T-cell (primary cell): ENCODE measurements at regions of chr9 and their contacts with region 1.

Region 1: DNA sequence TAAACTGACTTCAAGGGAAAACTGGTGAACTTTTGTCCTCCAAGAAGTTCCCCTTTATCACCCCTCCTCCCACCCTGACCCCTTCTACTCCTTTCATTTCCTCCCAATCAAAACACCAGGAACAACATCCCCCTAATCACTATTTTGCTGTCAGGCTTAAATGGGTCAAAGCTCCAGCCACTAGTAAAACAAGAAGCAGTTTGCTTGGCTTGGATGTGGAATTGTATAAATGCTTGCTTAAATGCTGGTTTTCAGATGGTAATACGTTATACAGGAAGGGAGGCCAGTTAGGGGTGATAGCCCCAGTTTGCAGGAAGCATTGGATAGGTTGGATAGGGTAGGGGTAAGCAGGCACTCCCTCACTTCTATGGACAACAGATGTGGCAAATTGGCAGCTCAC is 473.6 kb downstream of the AGTPBP1 start:
- DNase-seq: no peak
- ATAC-seq: no peak
- H3K4me3 ChIP-seq: no peak overlapping the region
- H3K4me3 Mint-ChIP-seq: no peak overlapping the region
- H3K27ac ChIP-seq: no peak overlapping the region
- H3K27ac Mint-ChIP-seq: no peak overlapping the region
- H3K4me1 ChIP-seq: no peaks in the 10 kb centered on the region
- H3K4me1 Mint-ChIP-seq: no peaks in the 10 kb centered on the region
- H3K27me3 ChIP-seq: peaks cover 0 to 5% of the 10 kb centered on the region in 2 experiments
- H3K27me3 Mint-ChIP-seq: peaks cover 1 to 3% of the 10 kb centered on the region in 2 donors

Region 2: GRCh38 chr9:85202596-85202995 is 65.5 kb before region 1 on chr9:
- CTCF ChIA-PET with region 1: interaction called in 1 of 2 experiments, 10 read pairs
- POLR2A ChIA-PET with region 1: no interaction called
- DNase-seq: no peak
- ATAC-seq: no peak
- H3K4me3 ChIP-seq: no peak overlapping the region
- H3K4me3 Mint-ChIP-seq: no peak overlapping the region
- H3K27ac ChIP-seq: no peak overlapping the region
- H3K27ac Mint-ChIP-seq: no peak overlapping the region
- H3K4me1 ChIP-seq: no peaks in the 10 kb centered on the region
- H3K4me1 Mint-ChIP-seq: no peaks in the 10 kb centered on the region
- H3K27me3 ChIP-seq: peaks cover 0 to 6% of the 10 kb centered on the region in 2 experiments
- H3K27me3 Mint-ChIP-seq: peaks cover 1 to 5% of the 10 kb centered on the region in 2 donors